Thyroid gland (tissue), 4 donors: ENCODE measurements at regions of chr21 and their contacts with region 1.

Region 1: DNA sequence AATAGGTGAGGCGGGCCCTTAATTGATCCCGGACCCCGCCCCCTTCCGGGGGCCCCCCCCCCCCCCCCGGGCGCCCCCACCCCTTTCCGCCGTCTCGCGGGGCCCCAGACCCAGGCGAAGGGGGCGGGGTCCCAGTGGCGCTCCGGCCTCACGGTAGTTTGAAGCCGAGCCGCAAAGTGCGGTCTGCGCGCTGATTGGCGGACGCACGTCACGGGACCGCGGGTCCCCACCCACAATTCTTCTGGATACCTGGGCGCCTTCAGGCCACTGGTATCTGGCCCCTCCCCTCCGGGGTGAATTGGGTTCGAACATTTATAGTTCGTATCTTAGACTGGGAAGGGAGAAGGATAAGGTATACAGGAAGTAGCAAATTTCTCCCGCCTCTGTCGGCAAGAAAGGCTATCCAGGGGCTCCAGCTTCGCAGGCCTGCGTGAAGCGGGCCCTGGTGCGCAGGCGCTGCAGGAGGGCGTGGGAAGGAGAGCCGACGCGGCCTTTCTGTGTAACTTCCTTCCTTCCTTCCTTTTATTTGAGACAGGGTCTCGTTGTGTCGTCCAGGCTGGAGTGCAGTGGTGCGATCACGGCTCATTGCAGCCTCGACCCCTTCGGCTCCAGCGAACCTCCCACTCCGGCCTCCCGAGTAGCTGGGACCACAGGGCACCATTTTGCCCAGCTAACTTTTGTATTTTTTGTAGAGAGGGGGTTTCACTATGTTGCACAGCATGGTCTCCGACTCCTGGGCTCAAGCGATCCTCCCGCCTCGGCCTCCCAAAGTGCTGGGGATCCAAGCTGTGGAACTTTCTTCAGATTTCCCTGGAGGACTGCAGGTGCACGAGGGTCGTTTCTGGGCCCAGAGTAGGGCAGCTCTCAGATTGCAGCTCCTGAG is 564 bp upstream of the HMGN1 start:
- DNase-seq: peak; percentile 99
- H3K4me3 ChIP-seq: peak overlapping the region in 2 of 3 donors; percentile 7 to 64
- H3K27ac ChIP-seq: peak overlapping the region; percentile 52 to 83 (median 74)
- H3K4me1 ChIP-seq: peaks cover 5 to 6% of the 10 kb centered on the region in 2 donors
- H3K27me3 ChIP-seq: no peaks in the 10 kb centered on the region
- CTCF ChIP-seq: no peak
- POLR2A ChIP-seq: peak in 1 of 2 donors; percentile 25

Region 2: GRCh38 chr21:39105341-39105765 is 244.1 kb before region 1 on chr21:
- intact Hi-C with region 1: no loop called
- DNase-seq: no peak
- H3K4me3 ChIP-seq: no peak overlapping the region
- H3K27ac ChIP-seq: no peak overlapping the region
- H3K4me1 ChIP-seq: peaks cover 0 to 4% of the 10 kb centered on the region in 2 donors
- H3K27me3 ChIP-seq: no peaks in the 10 kb centered on the region
- CTCF ChIP-seq: no peak
- POLR2A ChIP-seq: no peak

Region 3: GRCh38 chr21:39388038-39388810 is 38.8 kb after region 1 on chr21:
- intact Hi-C with region 1: loop called (anchors 5 kb)
- DNase-seq: peak; percentile 89 to 92
- H3K4me3 ChIP-seq: peak overlapping the region in 2 of 3 donors; percentile 24 to 44
- H3K27ac ChIP-seq: peak overlapping the region in 2 of 3 donors; percentile 25 to 72
- H3K4me1 ChIP-seq: peaks cover 12 to 16% of the 10 kb centered on the region in 2 donors
- H3K27me3 ChIP-seq: no peaks in the 10 kb centered on the region
- CTCF ChIP-seq: peak; percentile 76 to 92 (median 86)
- POLR2A ChIP-seq: no peak